ENCODE measurements at regions of chr5 and their contacts with region 1.

Region 1: DNA sequence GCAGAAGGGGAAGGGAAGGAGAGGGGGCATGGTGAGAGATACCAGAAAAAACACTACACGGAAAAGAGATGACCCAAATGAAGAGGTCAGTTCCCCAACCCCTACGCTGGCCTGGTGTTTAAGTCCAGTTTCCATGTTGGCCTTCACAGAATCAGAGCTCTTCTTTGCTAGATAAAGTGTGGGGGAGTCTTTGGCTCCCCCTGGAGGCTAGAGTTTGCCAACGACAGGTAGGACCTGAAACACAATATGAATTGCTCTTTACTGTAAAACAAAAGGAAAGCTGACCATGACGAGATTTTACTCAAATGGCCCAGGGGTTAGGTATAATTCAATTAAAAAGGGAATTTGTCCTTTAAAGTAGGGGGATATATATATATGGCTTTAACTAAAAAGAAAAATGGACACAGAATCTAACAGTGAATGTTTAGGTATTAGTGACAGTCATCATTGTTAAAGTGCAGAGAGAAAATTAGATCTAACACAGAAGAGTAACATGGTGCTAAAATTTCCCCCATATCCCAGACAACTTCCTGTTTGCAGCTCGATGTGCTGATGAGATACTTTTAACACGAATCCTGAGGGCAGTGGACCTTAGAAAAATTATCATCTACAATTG is 92.0 kb downstream of the SV2C start:
- DNase-seq: peak; percentile 68
- H3K4me3 ChIP-seq: no peak overlapping the region
- H3K27ac ChIP-seq: no peak overlapping the region
- H3K4me1 ChIP-seq: no peaks in the 10 kb centered on the region
- H3K27me3 ChIP-seq: peaks cover 0 to 2% of the 10 kb centered on the region in 2 experiments
- CTCF ChIP-seq: peak; percentile 79 to 85
- POLR2A ChIP-seq: no peak

Region 2: GRCh38 chr5:75236322-75237316 is 938.5 kb before region 1 on chr5 and contains the start of gene ANKRD31:
- CTCF ChIA-PET with region 1: interaction called, 56 read pairs
- POLR2A ChIA-PET with region 1: no interaction called
- dilution Hi-C with region 1: no loop called
- intact Hi-C with region 1: loop called (anchors 1 kb)
- DNase-seq: peak; percentile 71
- H3K4me3 ChIP-seq: peak within 1 kb of the TSS; percentile 8 to 57 (median 53)
- H3K27ac ChIP-seq: no peak within 1 kb of the TSS
- H3K4me1 ChIP-seq: peaks cover 3% of the 10 kb centered on the region
- H3K27me3 ChIP-seq: no peaks in the 10 kb centered on the region
- CTCF ChIP-seq: peak; percentile 67 to 86
- POLR2A ChIP-seq: peak; percentile 38
- total RNA-seq, gene ANKRD31: not detected in 2 replicates

Region 3: GRCh38 chr5:75734913-75735789 is 440.0 kb before region 1 on chr5:
- CTCF ChIA-PET with region 1: interaction called, 21 read pairs
- POLR2A ChIA-PET with region 1: no interaction called
- dilution Hi-C with region 1: no loop called
- intact Hi-C with region 1: loop called (anchors 1 kb)
- DNase-seq: no peak
- H3K4me3 ChIP-seq: no peak overlapping the region
- H3K27ac ChIP-seq: no peak overlapping the region
- H3K4me1 ChIP-seq: no peaks in the 10 kb centered on the region
- H3K27me3 ChIP-seq: peaks cover 3 to 14% of the 10 kb centered on the region in 2 experiments
- CTCF ChIP-seq: peak; percentile 21 to 37
- POLR2A ChIP-seq: no peak

Region 4: DNA sequence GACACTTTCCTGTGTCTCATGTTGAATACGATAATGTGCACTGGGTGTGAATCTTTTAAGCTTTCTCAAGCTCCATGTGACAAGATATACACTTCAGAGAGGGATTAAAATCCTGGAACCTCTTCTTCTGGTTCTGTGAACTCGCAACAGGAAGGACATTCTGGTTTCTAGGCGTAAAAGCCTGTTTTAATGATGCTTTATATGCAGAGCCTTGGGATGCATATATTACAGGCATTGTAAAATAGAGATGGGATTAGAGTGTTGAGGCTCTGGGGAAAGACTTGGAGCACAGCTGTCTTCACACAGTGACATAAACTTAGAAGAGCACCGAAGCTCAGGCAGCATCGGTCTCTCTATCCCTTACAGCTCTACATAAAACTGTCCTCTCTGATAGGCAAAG is 199.7 kb before region 1 on chr5:
- CTCF ChIA-PET with region 1: no interaction called
- POLR2A ChIA-PET with region 1: no interaction called
- dilution Hi-C with region 1: no loop called
- intact Hi-C with region 1: no loop called
- DNase-seq: no peak
- H3K4me3 ChIP-seq: no peak overlapping the region
- H3K27ac ChIP-seq: no peak overlapping the region
- H3K4me1 ChIP-seq: no peaks in the 10 kb centered on the region
- H3K27me3 ChIP-seq: no peaks in the 10 kb centered on the region
- CTCF ChIP-seq: no peak
- POLR2A ChIP-seq: no peak

Region 5: DNA sequence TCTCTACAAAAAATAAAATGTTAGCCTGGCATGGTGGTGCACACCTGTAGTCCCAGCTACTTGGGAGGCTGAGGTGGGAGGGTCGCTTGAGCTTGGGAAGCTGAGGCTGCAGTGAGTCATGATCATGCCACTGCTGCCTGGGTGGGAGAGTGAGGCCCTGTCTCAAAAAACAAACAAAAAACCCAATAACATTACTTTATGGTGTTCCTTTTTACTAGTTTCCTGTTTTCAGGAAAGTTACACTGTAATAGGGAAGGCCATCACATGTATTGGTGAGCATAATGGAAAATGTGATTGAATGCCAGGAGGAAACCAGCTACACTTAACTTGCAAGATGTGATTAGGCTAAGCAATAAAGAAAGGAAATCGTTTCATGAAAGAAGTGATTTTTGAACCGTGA is 49.3 kb before region 1 on chr5:
- CTCF ChIA-PET with region 1: interaction called, 10 read pairs
- POLR2A ChIA-PET with region 1: no interaction called
- dilution Hi-C with region 1: no loop called
- intact Hi-C with region 1: no loop called
- DNase-seq: peak; percentile 14
- H3K4me3 ChIP-seq: no peak overlapping the region
- H3K27ac ChIP-seq: no peak overlapping the region
- H3K4me1 ChIP-seq: no peaks in the 10 kb centered on the region
- H3K27me3 ChIP-seq: no peaks in the 10 kb centered on the region
- CTCF ChIP-seq: no peak
- POLR2A ChIP-seq: no peak

Region 6: GRCh38 chr5:76154009-76154690 is 21.0 kb before region 1 on chr5:
- CTCF ChIA-PET with region 1: interaction called, 11 read pairs
- POLR2A ChIA-PET with region 1: no interaction called
- dilution Hi-C with region 1: no loop called
- intact Hi-C with region 1: no loop called
- DNase-seq: no peak
- H3K4me3 ChIP-seq: no peak overlapping the region
- H3K27ac ChIP-seq: no peak overlapping the region
- H3K4me1 ChIP-seq: peaks cover 17% of the 10 kb centered on the region
- H3K27me3 ChIP-seq: peaks cover 5 to 6% of the 10 kb centered on the region in 2 experiments
- CTCF ChIP-seq: no peak
- POLR2A ChIP-seq: no peak

Measured in endothelial cell of umbilical vein (primary cell).